Vagina (tissue), 2 donors: ENCODE measurements at regions of chr19 and their contacts with region 1.

Region 1: DNA sequence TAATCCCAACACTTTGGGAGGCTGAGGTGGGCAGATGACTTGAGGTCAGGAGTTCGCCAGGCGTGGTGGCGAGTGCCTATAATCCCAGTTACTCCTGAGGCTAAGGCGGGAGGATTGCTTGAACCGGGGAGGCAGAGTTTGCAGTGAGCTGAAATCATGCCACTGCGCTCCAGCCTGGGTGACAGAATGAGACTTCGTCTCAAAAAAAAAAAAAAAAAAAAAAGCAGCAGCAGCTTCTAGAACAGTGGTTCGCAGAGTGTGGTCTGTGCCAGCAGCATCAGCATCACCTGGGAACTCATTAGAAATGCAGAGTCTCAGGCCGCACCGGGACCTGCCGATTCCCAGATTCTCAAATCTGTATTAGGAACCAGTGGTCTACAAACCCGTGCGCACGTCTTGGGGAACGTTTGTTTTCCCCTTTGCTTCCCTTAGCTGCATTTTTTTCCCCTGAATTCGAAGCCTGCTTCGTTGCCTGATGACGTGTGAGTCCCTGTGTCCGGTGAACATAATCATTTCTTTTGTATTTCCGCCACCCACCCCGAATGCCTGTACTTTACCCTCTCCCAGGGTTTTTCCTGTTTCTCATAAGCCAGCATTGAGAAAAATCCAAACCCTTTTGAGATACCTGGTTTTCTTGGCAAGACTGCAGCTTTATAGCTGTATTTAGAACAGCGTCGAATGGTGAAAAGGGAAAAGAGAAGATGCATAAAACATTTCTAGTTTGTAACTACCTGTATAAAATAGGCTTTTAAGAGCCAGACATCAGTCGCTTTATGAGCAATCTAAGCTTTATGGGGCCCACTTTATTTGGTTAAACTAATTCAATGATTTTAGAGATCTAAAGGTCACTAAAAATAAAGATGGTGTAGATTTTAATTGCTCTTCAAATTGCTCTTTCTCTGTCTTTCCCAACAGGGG is 49.8 kb downstream of the BICRA start:
- DNase-seq: no peak
- H3K4me3 ChIP-seq: no peak overlapping the region
- H3K27ac ChIP-seq: peak overlapping the region; percentile 27
- H3K4me1 ChIP-seq: peaks cover 57% of the 10 kb centered on the region
- H3K27me3 ChIP-seq: no peaks in the 10 kb centered on the region
- CTCF ChIP-seq: no peak
- POLR2A ChIP-seq: no peak

Region 2: GRCh38 chr19:46813839-46814363 is 844.8 kb before region 1 on chr19:
- intact Hi-C with region 1: loop called (anchors 10 kb)
- DNase-seq: no peak
- H3K4me3 ChIP-seq: no peak overlapping the region
- H3K27ac ChIP-seq: peak overlapping the region; percentile 48
- H3K4me1 ChIP-seq: peaks cover 10% of the 10 kb centered on the region
- H3K27me3 ChIP-seq: no peaks in the 10 kb centered on the region
- CTCF ChIP-seq: no peak
- POLR2A ChIP-seq: no peak